ENCODE measurements at regions of chr6 and their contacts with region 1.

Region 1: DNA sequence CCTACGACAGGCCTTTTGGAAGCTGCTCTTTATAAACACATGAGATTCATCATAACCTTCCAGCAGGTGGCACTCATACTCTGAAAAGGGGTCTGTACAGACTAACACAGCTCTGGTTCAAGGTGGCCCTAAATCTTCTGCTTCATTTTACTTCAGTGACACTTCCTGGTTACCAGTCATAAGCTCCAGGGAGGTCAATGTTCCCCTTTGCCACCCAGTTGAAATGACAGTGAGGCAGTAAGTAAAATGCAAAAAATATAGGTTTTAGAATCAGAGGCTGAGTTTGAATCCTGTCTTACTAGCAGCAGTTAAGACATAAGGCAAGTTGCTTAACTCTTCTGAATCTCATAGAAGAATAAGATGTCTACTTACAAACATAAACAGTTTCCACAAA is 132.8 kb downstream of the CDK19 start:
- DNase-seq: peak; percentile 76 to 81 (median 78)
- H3K4me3 ChIP-seq: no peak overlapping the region
- H3K4me3 Mint-ChIP-seq: peak overlapping the region in 1 of 8 donors; percentile 0
- H3K27ac ChIP-seq: no peak overlapping the region
- H3K27ac Mint-ChIP-seq: peak overlapping the region in 4 of 7 donors; percentile 60 to 76 (median 69)
- H3K4me1 ChIP-seq: peaks cover 13% of the 10 kb centered on the region
- H3K4me1 Mint-ChIP-seq: peaks cover 11 to 24% (median 16%) of the 10 kb centered on the region in 4 donors
- H3K27me3 ChIP-seq: no peaks in the 10 kb centered on the region
- H3K27me3 Mint-ChIP-seq: no peaks in the 10 kb centered on the region

Region 2: GRCh38 chr6:109477725-109478124 is 1204.7 kb before region 1 on chr6:
- CTCF ChIA-PET with region 1: no interaction called
- POLR2A ChIA-PET with region 1: no interaction called
- intact Hi-C with region 1: no loop called
- DNase-seq: no peak
- H3K4me3 ChIP-seq: peak overlapping the region in 1 of 2 donors; percentile 22
- H3K4me3 Mint-ChIP-seq: peak overlapping the region; percentile 73 to 97 (median 89)
- H3K27ac ChIP-seq: peak overlapping the region; percentile 27
- H3K27ac Mint-ChIP-seq: peak overlapping the region; percentile 43 to 92 (median 80)
- H3K4me1 ChIP-seq: peaks cover 76% of the 10 kb centered on the region
- H3K4me1 Mint-ChIP-seq: peaks cover 66 to 90% (median 79%) of the 10 kb centered on the region in 4 donors
- H3K27me3 ChIP-seq: no peaks in the 10 kb centered on the region
- H3K27me3 Mint-ChIP-seq: no peaks in the 10 kb centered on the region

Region 3: GRCh38 chr6:110528101-110528929 is 154.1 kb before region 1 on chr6:
- CTCF ChIA-PET with region 1: interaction called, 32 read pairs
- POLR2A ChIA-PET with region 1: no interaction called
- intact Hi-C with region 1: loop called (anchors 1 kb)
- DNase-seq: peak in 4 of 5 donors; percentile 57 to 61 (median 60)
- H3K4me3 ChIP-seq: no peak overlapping the region
- H3K4me3 Mint-ChIP-seq: no peak overlapping the region
- H3K27ac ChIP-seq: no peak overlapping the region
- H3K27ac Mint-ChIP-seq: no peak overlapping the region
- H3K4me1 ChIP-seq: no peaks in the 10 kb centered on the region
- H3K4me1 Mint-ChIP-seq: peaks cover 0 to 7% (median 3%) of the 10 kb centered on the region in 4 donors
- H3K27me3 ChIP-seq: no peaks in the 10 kb centered on the region
- H3K27me3 Mint-ChIP-seq: no peaks in the 10 kb centered on the region

Region 4: DNA sequence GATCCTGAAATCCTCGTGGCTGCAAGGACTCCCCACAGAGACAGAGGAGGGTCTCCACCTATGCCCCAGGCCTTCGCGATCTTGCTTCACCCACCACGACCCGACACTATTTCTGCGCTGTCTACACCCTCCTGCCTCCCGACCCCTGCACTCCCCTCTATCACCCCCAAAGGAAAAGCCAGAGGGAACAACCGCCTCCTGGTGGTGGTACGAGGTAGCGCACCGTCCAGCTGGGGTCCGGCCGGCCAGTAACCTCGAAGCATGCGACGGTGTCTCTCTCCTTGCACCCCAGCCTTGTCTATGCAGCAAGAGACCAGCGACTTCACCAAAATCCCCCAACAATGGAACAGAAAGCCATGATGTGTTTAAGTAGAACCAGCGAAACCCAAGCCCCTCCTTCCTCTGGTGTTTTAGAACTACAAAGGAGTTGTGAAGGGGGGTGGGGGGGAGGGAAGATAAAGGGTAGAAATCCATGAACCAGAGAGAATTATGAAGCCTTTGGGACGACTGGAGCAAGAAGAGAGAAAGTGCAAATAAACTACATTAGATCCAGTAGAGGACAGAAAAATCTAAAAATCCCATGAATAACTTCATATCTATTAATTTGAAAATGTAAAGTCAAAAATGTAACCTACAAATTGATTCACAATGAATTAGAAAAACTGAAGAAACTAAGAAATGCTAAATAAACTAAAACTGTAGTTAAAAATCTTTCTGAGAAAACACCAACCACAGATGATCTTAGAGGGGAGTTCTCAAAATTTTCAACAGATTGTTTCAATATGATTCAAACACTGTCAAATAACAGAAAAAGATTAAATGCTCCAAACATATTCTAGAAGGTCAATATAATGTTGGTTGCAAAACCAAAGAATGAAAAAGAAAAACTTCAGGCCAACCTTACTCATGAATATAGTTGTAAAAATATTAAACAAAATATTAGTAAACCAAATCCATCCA is 35.2 kb before region 1 on chr6:
- CTCF ChIA-PET with region 1: no interaction called
- POLR2A ChIA-PET with region 1: no interaction called
- intact Hi-C with region 1: no loop called
- DNase-seq: no peak
- H3K4me3 ChIP-seq: no peak overlapping the region
- H3K4me3 Mint-ChIP-seq: no peak overlapping the region
- H3K27ac ChIP-seq: no peak overlapping the region
- H3K27ac Mint-ChIP-seq: no peak overlapping the region
- H3K4me1 ChIP-seq: no peaks in the 10 kb centered on the region
- H3K4me1 Mint-ChIP-seq: peaks cover 0 to 2% (median 0%) of the 10 kb centered on the region in 4 donors
- H3K27me3 ChIP-seq: no peaks in the 10 kb centered on the region
- H3K27me3 Mint-ChIP-seq: no peaks in the 10 kb centered on the region

Region 5: DNA sequence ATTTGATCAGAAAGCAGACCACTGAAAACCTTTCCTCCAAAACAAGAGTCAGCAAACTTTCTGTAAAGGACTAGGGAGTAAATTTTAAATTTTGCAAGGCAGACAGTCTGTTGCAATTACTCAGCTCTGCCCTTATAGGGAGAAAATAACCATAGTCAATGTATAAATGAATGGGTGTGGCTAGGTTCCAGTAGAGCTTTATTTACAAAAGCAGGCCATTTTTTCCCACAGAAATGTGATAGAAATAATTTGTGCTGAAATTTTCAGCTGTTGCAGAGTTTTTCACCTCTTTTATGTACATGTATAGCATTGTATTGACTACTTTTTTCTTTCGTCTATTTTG is 199.8 kb after region 1 on chr6:
- CTCF ChIA-PET with region 1: interaction called, 66 read pairs
- POLR2A ChIA-PET with region 1: interaction called, 33 read pairs
- intact Hi-C with region 1: loop called (anchors 1 kb)
- DNase-seq: no peak
- H3K4me3 ChIP-seq: no peak overlapping the region
- H3K4me3 Mint-ChIP-seq: peak overlapping the region in 6 of 8 donors; percentile 26 to 89 (median 60)
- H3K27ac ChIP-seq: no peak overlapping the region
- H3K27ac Mint-ChIP-seq: peak overlapping the region in 6 of 7 donors; percentile 19 to 64 (median 35)
- H3K4me1 ChIP-seq: peaks cover 99% of the 10 kb centered on the region
- H3K4me1 Mint-ChIP-seq: peaks cover 69 to 99% (median 84%) of the 10 kb centered on the region in 4 donors
- H3K27me3 ChIP-seq: no peaks in the 10 kb centered on the region
- H3K27me3 Mint-ChIP-seq: no peaks in the 10 kb centered on the region

Region 6: DNA sequence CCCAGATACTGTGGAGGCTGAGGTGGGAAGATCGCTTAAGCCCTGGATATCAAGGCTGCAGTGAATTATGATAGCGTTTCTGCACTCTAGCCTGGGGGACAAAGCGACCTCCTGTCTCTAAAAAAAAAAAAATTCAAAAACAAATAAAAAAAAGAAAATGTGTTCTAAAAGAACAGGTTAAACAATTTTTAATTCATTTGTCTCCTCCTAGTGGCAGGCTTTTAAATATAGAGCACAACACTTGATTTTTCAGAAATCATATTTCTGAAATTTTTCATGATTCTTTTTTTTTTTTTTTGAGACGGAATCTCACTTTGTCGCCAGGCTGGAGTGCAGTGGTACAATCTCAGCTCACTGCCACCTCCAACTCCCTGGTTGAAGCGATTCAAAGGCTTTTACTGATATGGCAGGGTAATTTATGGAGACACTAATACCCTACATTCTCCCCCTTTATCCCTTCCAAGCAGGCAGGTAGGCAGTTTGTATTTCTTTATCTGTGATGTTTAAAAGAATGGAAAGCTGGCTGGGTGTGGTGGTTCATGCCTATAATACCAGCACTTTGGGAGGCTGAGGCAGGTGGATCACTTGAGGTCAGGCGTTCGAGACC is 267.3 kb after region 1 on chr6:
- CTCF ChIA-PET with region 1: interaction called, 192 read pairs
- POLR2A ChIA-PET with region 1: interaction called, 5 read pairs
- intact Hi-C with region 1: loop called (anchors 1 kb)
- DNase-seq: peak in 4 of 5 donors; percentile 37 to 47 (median 40)
- H3K4me3 ChIP-seq: no peak overlapping the region
- H3K4me3 Mint-ChIP-seq: no peak overlapping the region
- H3K27ac ChIP-seq: no peak overlapping the region
- H3K27ac Mint-ChIP-seq: peak overlapping the region in 2 of 7 donors; percentile 23 to 42
- H3K4me1 ChIP-seq: no peaks in the 10 kb centered on the region
- H3K4me1 Mint-ChIP-seq: peaks cover 0 to 5% (median 2%) of the 10 kb centered on the region in 4 donors
- H3K27me3 ChIP-seq: no peaks in the 10 kb centered on the region
- H3K27me3 Mint-ChIP-seq: no peaks in the 10 kb centered on the region

Region 7: DNA sequence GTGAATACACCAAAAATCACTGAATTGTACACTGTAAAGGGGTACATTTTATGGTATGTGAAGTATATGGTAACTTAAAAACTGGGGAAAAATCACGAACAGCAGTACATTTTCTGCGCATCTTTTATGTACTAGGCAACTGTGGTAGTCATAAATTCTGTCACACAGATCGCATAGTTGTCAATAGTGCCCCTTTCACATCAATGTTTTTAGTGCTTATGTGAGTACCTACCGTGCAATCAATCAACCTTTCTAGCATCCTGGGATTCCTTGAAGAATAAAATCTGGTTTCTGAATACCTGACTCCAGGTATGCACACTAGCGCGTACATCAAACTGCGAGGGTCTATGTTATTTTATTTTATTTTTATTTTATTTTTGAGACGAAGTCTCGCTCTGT is 298.7 kb after region 1 on chr6:
- CTCF ChIA-PET with region 1: interaction called, 11 read pairs
- POLR2A ChIA-PET with region 1: no interaction called
- intact Hi-C with region 1: no loop called
- DNase-seq: peak in 2 of 5 donors; percentile 1 to 29
- H3K4me3 ChIP-seq: peak overlapping the region; percentile 20 to 95
- H3K4me3 Mint-ChIP-seq: peak overlapping the region; percentile 93 to 99 (median 98)
- H3K27ac ChIP-seq: peak overlapping the region; percentile 86
- H3K27ac Mint-ChIP-seq: peak overlapping the region; percentile 99 to 100 (median 100)
- H3K4me1 ChIP-seq: peaks cover 17% of the 10 kb centered on the region
- H3K4me1 Mint-ChIP-seq: peaks cover 28 to 49% (median 30%) of the 10 kb centered on the region in 4 donors
- H3K27me3 ChIP-seq: no peaks in the 10 kb centered on the region
- H3K27me3 Mint-ChIP-seq: no peaks in the 10 kb centered on the region